Activated CD8-positive, alpha-beta memory T cell treated with anti-CD3 and anti-CD28 coated beads, Interleukin-2, amount 10 ng/mL, durations not matched to agents 7 days and 5 days (primary cell): ENCODE measurements at regions of chr19 and their contacts with region 1.

Region 1: DNA sequence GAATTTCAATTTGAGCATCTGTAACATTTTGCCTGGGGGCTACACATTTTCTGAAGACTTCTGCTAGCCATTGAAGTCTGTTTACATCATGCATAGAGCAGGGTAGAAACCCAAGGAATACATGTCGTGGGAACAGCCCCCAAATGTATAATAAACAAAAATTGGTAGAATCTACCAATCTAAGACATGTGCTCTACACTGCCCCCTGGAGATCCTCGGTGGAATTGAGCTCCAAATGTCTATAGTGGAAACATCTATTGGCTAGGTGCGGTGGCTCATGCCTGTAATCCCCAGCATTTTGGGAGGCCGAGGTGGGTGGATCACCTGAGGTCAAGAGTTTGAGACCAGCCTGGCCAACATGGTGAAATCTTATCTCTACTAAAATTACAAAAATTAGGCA is 57.3 kb downstream of the MBD3L2B start:
- DNase-seq: peak; percentile 43
- ATAC-seq: no peak
- H3K4me3 Mint-ChIP-seq: no peak overlapping the region
- H3K27ac Mint-ChIP-seq: no peak overlapping the region
- H3K4me1 Mint-ChIP-seq: no peaks in the 10 kb centered on the region
- H3K27me3 Mint-ChIP-seq: no peaks in the 10 kb centered on the region

Region 2: GRCh38 chr19:6976197-6976596 is 12.3 kb after region 1 on chr19:
- CTCF ChIA-PET with region 1: interaction called, 14 read pairs
- DNase-seq: no peak
- ATAC-seq: no peak
- H3K4me3 Mint-ChIP-seq: no peak overlapping the region
- H3K27ac Mint-ChIP-seq: no peak overlapping the region
- H3K4me1 Mint-ChIP-seq: peaks cover 2% of the 10 kb centered on the region
- H3K27me3 Mint-ChIP-seq: peaks cover 9% of the 10 kb centered on the region